ENCODE measurements at regions of chr7 and their contacts with region 1.

Region 1: GRCh38 chr7:1086588-1087464 is 1.1 kb upstream of the GPER1 start:
- DNase-seq: peak; percentile 72 to 80
- ATAC-seq: peak; percentile 78 to 89 (median 85)
- H3K4me3 ChIP-seq: peak overlapping the region; percentile 9
- H3K4me3 Mint-ChIP-seq: peak overlapping the region; percentile 83
- H3K27ac ChIP-seq: peak overlapping the region; percentile 56
- H3K27ac Mint-ChIP-seq: no peak overlapping the region
- H3K4me1 ChIP-seq: peaks cover 12% of the 10 kb centered on the region
- H3K4me1 Mint-ChIP-seq: peaks cover 8 to 12% of the 10 kb centered on the region in 2 donors
- H3K27me3 ChIP-seq: no peaks in the 10 kb centered on the region
- H3K27me3 Mint-ChIP-seq: no peaks in the 10 kb centered on the region
- CTCF ChIP-seq: peak; percentile 85

Region 2: GRCh38 chr7:1015196-1016121 is 71.4 kb before region 1 on chr7:
- intact Hi-C with region 1: no loop called
- DNase-seq: no peak
- ATAC-seq: no peak
- H3K4me3 ChIP-seq: no peak overlapping the region
- H3K4me3 Mint-ChIP-seq: no peak overlapping the region
- H3K27ac ChIP-seq: no peak overlapping the region
- H3K27ac Mint-ChIP-seq: no peak overlapping the region
- H3K4me1 ChIP-seq: peaks cover 20% of the 10 kb centered on the region
- H3K4me1 Mint-ChIP-seq: peaks cover 22 to 24% of the 10 kb centered on the region in 2 donors
- H3K27me3 ChIP-seq: no peaks in the 10 kb centered on the region
- H3K27me3 Mint-ChIP-seq: no peaks in the 10 kb centered on the region
- CTCF ChIP-seq: no peak

Region 3: GRCh38 chr7:1169409-1170368 is 82.9 kb after region 1 on chr7:
- intact Hi-C with region 1: loop called (anchors 1 kb)
- DNase-seq: peak; percentile 92 to 94
- ATAC-seq: peak; percentile 100
- H3K4me3 ChIP-seq: peak overlapping the region; percentile 54
- H3K4me3 Mint-ChIP-seq: peak overlapping the region; percentile 78
- H3K27ac ChIP-seq: peak overlapping the region; percentile 47
- H3K27ac Mint-ChIP-seq: peak overlapping the region; percentile 78 to 87
- H3K4me1 ChIP-seq: peaks cover 11% of the 10 kb centered on the region
- H3K4me1 Mint-ChIP-seq: peaks cover 6 to 13% of the 10 kb centered on the region in 2 donors
- H3K27me3 ChIP-seq: no peaks in the 10 kb centered on the region
- H3K27me3 Mint-ChIP-seq: no peaks in the 10 kb centered on the region
- CTCF ChIP-seq: peak; percentile 89

Region 4: GRCh38 chr7:1175967-1176851 is 89.4 kb after region 1 on chr7:
- intact Hi-C with region 1: loop called (anchors 1 kb)
- DNase-seq: peak; percentile 82
- ATAC-seq: peak; percentile 80 to 81 (median 80)
- H3K4me3 ChIP-seq: no peak overlapping the region
- H3K4me3 Mint-ChIP-seq: peak overlapping the region; percentile 64
- H3K27ac ChIP-seq: no peak overlapping the region
- H3K27ac Mint-ChIP-seq: peak overlapping the region in 1 of 2 donors; percentile 65
- H3K4me1 ChIP-seq: peaks cover 8% of the 10 kb centered on the region
- H3K4me1 Mint-ChIP-seq: peaks cover 12 to 14% of the 10 kb centered on the region in 2 donors
- H3K27me3 ChIP-seq: no peaks in the 10 kb centered on the region
- H3K27me3 Mint-ChIP-seq: peaks cover 11 to 20% of the 10 kb centered on the region in 2 donors
- CTCF ChIP-seq: peak; percentile 77

Region 5: GRCh38 chr7:1197997-1198625 is 111.3 kb after region 1 on chr7:
- intact Hi-C with region 1: no loop called
- DNase-seq: no peak
- ATAC-seq: no peak
- H3K4me3 ChIP-seq: no peak overlapping the region
- H3K4me3 Mint-ChIP-seq: no peak overlapping the region
- H3K27ac ChIP-seq: no peak overlapping the region
- H3K27ac Mint-ChIP-seq: no peak overlapping the region
- H3K4me1 ChIP-seq: no peaks in the 10 kb centered on the region
- H3K4me1 Mint-ChIP-seq: no peaks in the 10 kb centered on the region
- H3K27me3 ChIP-seq: no peaks in the 10 kb centered on the region
- H3K27me3 Mint-ChIP-seq: peaks cover 0 to 8% of the 10 kb centered on the region in 2 donors
- CTCF ChIP-seq: no peak

Measured in natural killer cell (primary cell).